Activated T-helper 1 cell treated with anti-CD3 and anti-CD28 coated beads, Interleukin-12 subunit alpha, Interleukin-12 subunit beta, Interleukin-2, Interleukin-4 antibody, amounts not matched to agents 30 ng/mL and 10 ng/mL and 1 ng/mL, durations not matched to agents 14 hours and 24 hours and 36 hours (primary cell): ENCODE measurements at regions of chr5 and their contacts with region 1.

Region 1: DNA sequence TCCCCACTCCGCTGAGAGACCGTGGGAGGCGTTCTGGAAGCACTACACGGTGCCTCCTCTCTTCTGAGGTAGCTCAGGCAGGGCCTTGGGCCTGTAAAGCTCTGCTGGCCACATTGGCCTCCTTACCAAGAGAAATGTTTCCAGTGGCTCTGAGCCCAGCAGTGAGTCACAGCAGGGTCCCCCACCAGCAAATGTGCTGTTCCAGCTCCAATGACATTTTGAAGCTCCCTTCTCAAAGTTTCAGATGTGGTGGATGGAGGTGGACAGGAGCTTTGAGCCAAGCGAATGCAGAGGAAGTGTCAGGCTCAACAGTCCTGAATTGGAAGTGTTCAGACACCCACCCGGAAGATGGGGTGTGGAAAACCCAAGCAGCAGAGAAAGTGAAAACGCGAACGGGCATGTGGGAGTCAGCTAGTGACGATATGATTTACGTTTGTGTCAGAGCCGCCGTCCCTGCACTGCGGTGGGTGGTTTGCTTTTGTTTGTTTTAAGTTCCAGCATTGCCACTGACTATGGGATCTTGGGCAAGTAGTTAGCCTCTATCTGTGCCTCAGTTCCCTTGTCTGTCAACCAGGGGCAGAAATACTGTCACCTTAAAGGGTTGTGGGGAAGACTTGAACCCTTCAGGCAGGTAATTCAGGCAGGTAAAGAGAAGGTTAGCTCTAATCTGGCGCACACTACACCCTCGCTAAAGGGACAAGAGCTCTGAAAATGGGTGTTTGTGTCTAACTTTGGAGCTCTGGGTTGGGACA is 38.2 kb downstream of the C5orf15 start:
- DNase-seq: peak; percentile 40
- H3K4me3 Mint-ChIP-seq: peak overlapping the region; percentile 72
- H3K27ac Mint-ChIP-seq: peak overlapping the region; percentile 99
- H3K4me1 Mint-ChIP-seq: peaks cover 58% of the 10 kb centered on the region
- H3K27me3 Mint-ChIP-seq: peaks cover 4% of the 10 kb centered on the region

Region 2: GRCh38 chr5:132979367-132979940 is 950.8 kb before region 1 on chr5:
- intact Hi-C with region 1: no loop called
- DNase-seq: no peak
- H3K4me3 Mint-ChIP-seq: no peak overlapping the region
- H3K27ac Mint-ChIP-seq: no peak overlapping the region
- H3K4me1 Mint-ChIP-seq: no peaks in the 10 kb centered on the region
- H3K27me3 Mint-ChIP-seq: peaks cover 6% of the 10 kb centered on the region

Region 3: DNA sequence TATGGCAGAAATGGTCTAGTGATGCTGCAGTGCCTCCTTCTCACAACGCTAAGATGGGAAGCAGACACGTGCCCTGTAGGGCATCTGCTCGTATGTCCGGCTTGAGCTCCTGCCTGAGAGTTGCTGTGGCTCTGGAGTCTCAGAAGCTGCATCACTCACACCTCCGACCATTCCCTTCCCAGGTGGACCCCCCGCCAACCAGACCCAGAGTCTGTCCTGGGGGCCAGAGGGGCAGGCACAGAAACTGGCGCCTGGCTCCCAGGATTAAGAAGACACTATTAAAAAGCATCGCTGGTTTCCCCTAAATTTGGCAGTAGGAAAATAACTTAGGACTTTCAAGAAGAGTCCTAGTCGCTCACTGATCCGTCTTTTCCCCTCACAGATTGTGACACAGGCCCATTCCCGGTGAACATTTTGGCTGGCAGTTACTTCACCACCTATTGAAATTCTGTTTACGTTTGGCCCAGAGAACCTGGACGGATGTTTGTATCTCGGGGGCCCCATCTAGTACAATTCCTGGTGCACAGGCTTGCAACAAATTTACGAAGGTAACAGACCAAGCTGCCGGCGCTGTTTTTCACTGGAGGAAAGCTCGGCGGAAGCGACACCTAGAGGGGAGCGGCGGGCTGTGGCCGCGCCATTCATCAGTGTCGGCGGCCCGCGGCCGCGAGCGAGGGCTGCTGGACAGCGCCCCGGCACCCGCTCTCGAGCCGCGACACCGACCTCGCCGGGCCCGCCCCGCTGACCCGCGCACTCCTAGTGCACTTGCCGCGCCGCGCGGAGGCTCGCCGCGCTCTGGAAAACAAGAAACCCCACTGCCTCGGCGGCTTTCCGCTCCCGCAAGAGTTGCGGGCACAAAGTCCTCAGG is 319.5 kb before region 1 on chr5:
- intact Hi-C with region 1: loop called (anchors 10 kb)
- DNase-seq: no peak
- H3K4me3 Mint-ChIP-seq: no peak overlapping the region
- H3K27ac Mint-ChIP-seq: no peak overlapping the region
- H3K4me1 Mint-ChIP-seq: peaks cover 4% of the 10 kb centered on the region
- H3K27me3 Mint-ChIP-seq: peaks cover 71% of the 10 kb centered on the region

Region 4: GRCh38 chr5:133785182-133785581 is 145.1 kb before region 1 on chr5:
- intact Hi-C with region 1: no loop called
- DNase-seq: no peak
- H3K4me3 Mint-ChIP-seq: no peak overlapping the region
- H3K27ac Mint-ChIP-seq: no peak overlapping the region
- H3K4me1 Mint-ChIP-seq: no peaks in the 10 kb centered on the region
- H3K27me3 Mint-ChIP-seq: peaks cover 8% of the 10 kb centered on the region

Region 5: DNA sequence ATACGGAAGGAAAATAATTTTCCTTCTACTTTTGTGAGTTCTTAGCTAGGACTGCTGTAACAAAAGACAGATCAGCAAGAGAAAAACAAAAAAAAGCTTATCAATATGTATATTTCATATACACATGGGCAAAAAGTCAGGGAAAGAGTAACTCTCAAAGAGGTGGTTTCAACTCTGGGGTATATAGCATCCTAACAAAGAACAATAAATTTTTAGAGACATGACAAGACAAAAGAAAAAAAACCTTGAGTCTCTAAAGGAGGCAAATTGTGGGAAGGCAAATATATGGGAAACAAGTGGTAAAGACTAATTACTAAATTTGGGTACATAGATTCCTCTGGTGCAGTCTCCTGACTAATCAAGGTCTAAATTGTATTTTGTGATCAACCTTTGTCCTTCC is 55.1 kb before region 1 on chr5:
- intact Hi-C with region 1: loop called (anchors 2 kb)
- DNase-seq: no peak
- H3K4me3 Mint-ChIP-seq: no peak overlapping the region
- H3K27ac Mint-ChIP-seq: peak overlapping the region; percentile 80
- H3K4me1 Mint-ChIP-seq: peaks cover 23% of the 10 kb centered on the region
- H3K27me3 Mint-ChIP-seq: no peaks in the 10 kb centered on the region

Region 6: DNA sequence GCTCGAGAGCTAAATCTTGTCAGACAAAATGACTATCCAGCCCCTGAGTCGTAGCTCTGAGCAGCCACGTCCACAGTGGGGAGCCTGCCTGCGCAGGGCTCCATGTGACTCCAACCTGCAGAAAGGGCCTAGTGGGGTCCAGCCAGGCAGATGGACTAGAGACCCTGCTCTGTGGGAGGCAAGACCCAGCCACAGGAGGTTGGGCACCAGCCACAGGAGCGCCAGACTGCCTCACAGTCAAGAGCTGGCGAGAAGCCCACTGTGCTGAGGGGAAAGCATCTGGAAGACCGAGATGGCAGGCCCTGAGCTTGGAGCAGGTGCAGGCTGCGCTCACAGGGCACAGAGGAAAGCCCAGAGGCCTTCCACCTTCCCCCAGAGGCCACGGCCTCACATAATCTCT is 23.2 kb before region 1 on chr5:
- intact Hi-C with region 1: no loop called
- DNase-seq: no peak
- H3K4me3 Mint-ChIP-seq: no peak overlapping the region
- H3K27ac Mint-ChIP-seq: no peak overlapping the region
- H3K4me1 Mint-ChIP-seq: no peaks in the 10 kb centered on the region
- H3K27me3 Mint-ChIP-seq: peaks cover 2% of the 10 kb centered on the region

Region 7: GRCh38 chr5:133919148-133920136 is 10.8 kb before region 1 on chr5:
- intact Hi-C with region 1: loop called (anchors 1 kb)
- DNase-seq: no peak
- H3K4me3 Mint-ChIP-seq: no peak overlapping the region
- H3K27ac Mint-ChIP-seq: peak overlapping the region; percentile 73
- H3K4me1 Mint-ChIP-seq: peaks cover 21% of the 10 kb centered on the region
- H3K27me3 Mint-ChIP-seq: peaks cover 2% of the 10 kb centered on the region

Region 8: GRCh38 chr5:133962801-133963476 is 32.7 kb after region 1 on chr5:
- intact Hi-C with region 1: loop called (anchors 1 kb)
- DNase-seq: no peak
- H3K4me3 Mint-ChIP-seq: peak overlapping the region; percentile 27
- H3K27ac Mint-ChIP-seq: peak overlapping the region; percentile 59
- H3K4me1 Mint-ChIP-seq: peaks cover 63% of the 10 kb centered on the region
- H3K27me3 Mint-ChIP-seq: no peaks in the 10 kb centered on the region

Region 9: GRCh38 chr5:133968049-133968980 is 38.1 kb after region 1 on chr5 and contains the start of gene C5orf15:
- intact Hi-C with region 1: loop called (anchors 1 kb)
- DNase-seq: peak; percentile 92
- H3K4me3 Mint-ChIP-seq: peak within 1 kb of the TSS; percentile 98
- H3K27ac Mint-ChIP-seq: peak within 1 kb of the TSS; percentile 96
- H3K4me1 Mint-ChIP-seq: peaks cover 55% of the 10 kb centered on the region
- H3K27me3 Mint-ChIP-seq: no peaks in the 10 kb centered on the region
- total RNA-seq, gene C5orf15: 50.0 and 50.8 TPM in 2 replicates